PC-3 (cell line): ENCODE measurements at regions of chr5 and their contacts with region 1.

Region 1: DNA sequence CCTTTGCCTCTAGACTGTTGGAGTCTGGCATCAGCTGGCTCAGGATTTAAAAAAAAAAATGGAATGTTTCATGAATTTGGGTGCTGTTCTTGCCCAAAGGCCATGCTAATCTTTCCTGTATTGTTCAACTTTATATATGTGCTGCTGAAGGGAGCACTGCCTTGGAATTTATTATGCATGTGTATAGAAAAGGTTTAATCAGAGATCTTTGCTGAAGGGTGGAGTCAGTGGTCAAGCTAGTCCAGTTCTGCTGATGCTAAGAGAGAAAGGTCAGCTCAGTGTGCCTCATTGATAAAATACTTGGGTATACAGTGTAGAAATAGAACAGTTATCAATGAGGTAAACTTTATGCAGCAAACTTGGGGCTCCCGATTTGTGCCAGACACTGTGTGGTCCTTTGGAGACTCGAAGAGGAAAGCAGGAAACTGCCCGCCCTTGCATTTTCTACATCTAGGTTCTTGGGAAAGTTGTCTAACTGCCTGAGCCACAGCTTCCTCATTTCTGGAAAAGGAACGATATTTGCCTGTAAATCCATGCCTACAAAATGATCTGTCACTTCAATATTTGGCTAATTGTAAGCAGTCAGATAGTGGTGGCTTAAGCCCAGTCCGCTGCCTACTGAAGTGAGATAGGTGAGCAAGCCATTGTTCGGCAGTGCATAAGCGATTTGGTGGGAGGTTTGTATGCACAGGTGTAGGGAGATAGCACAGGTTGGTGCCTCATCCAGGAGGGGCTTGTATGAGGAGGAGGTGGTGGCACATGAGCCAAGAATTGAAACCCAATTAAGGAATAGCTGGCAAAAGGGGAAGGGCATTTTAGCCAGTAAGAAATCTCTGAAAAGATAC is 29.2 kb upstream of the GTF2H2C start:
- DNase-seq: no peak
- ATAC-seq: no peak
- H3K4me3 ChIP-seq: no peak overlapping the region
- H3K27ac ChIP-seq: no peak overlapping the region
- H3K4me1 ChIP-seq: peaks cover 31% of the 10 kb centered on the region
- H3K27me3 ChIP-seq: no peaks in the 10 kb centered on the region
- CTCF ChIP-seq: no peak

Region 2: GRCh38 chr5:68911840-68912690 is 618.7 kb before region 1 on chr5:
- CTCF ChIA-PET with region 1: no interaction called
- POLR2A ChIA-PET with region 1: no interaction called
- intact Hi-C with region 1: no loop called
- DNase-seq: peak; percentile 12
- ATAC-seq: no peak
- H3K4me3 ChIP-seq: no peak overlapping the region
- H3K27ac ChIP-seq: no peak overlapping the region
- H3K4me1 ChIP-seq: no peaks in the 10 kb centered on the region
- H3K27me3 ChIP-seq: no peaks in the 10 kb centered on the region
- CTCF ChIP-seq: no peak

Region 3: GRCh38 chr5:69418559-69418958 is 112.2 kb before region 1 on chr5:
- CTCF ChIA-PET with region 1: no interaction called
- POLR2A ChIA-PET with region 1: no interaction called
- intact Hi-C with region 1: no loop called
- DNase-seq: no peak
- ATAC-seq: no peak
- H3K4me3 ChIP-seq: no peak overlapping the region
- H3K27ac ChIP-seq: no peak overlapping the region
- H3K4me1 ChIP-seq: peaks cover 7% of the 10 kb centered on the region; the same call in 1 of the 2 replicates
- H3K27me3 ChIP-seq: no peaks in the 10 kb centered on the region
- CTCF ChIP-seq: no peak

Region 4: DNA sequence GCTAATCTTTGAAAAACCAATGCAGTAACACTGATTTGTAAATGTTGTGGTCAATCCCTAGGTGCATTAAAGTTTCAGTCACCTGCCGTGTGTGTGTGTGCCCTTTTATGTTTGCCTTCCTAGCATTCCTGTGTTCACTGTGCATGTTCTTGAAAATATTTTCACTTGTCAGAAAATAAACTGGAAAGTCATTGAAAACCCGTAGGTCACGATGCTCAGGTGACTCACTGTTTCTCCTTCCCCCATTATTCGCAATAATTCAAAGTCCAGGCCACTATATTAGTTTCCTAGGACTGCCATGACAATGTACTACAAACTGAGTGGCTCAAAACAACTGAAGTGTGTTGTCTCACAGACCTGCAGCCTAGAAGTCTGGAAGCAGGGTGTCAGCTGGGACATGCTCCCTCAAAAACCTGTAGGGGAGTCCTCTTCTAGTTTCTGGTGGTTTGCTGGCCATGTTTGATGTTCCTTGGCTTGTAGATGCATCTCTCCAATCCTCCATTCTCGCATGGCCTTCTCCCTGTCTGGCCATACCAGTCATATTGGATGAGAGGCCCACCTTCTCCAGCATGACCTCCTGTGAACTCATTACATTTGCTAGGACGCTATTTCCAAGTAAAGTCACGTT is 86.5 kb before region 1 on chr5:
- CTCF ChIA-PET with region 1: no interaction called
- POLR2A ChIA-PET with region 1: interaction called, 12 read pairs
- intact Hi-C with region 1: no loop called
- DNase-seq: no peak
- ATAC-seq: no peak
- H3K4me3 ChIP-seq: no peak overlapping the region
- H3K27ac ChIP-seq: no peak overlapping the region
- H3K4me1 ChIP-seq: no peaks in the 10 kb centered on the region
- H3K27me3 ChIP-seq: no peaks in the 10 kb centered on the region
- CTCF ChIP-seq: no peak